ENCODE measurements at regions of chr7 and their contacts with region 1.

Region 1: DNA sequence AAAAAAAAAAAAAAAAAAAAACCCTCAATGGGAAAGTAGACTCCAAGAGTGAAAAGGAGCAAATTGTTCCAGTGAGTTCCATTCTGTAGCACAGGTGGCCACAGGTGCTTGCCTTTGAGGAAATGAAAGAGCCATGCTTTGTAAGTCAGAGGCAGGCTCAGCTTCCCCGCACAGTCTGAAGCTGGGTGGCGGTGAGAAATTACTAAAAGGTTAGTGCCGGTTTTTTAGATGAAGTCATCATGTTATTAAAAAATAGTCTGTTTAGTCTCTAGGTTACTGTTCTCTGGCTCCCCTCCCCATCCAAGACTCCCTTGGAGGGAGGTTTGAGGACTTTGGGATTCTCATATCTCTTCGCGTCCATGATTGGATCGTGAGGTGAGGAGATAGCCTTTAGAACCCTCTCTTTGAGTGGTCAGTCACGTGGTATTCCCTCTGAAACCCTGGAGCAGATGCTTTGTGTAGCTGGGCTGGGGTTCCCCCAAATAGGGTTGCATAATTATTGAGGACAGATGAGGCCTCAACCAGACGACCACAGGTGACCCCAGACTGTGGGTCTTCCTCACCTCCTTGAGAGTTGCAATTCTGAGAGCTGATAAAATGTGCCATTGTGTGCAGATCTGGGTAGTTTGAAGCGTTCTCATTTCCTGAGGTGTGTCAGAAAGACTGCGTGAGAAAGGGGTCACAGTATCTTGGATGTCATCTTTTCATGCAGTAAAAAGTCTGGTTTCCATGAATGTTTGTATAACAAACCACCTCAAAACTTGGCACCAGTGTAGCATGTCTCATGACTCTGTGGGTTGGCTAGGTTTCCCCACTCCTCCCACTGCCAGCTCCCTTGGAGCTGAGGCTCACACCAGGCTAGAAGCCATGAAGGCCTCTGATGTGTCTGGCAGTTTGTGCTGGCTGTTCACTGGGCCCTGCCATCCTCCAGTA is 27.1 kb downstream of the OGDH start:
- DNase-seq: peak in 12 of 14 experiments; percentile 29 to 92 (median 59)
- ATAC-seq: peak; percentile 47
- H3K4me3 ChIP-seq: no peak overlapping the region
- H3K4me3 Mint-ChIP-seq: peak overlapping the region; percentile 78
- H3K27ac ChIP-seq: peak overlapping the region; percentile 87 to 91
- H3K27ac Mint-ChIP-seq: peak overlapping the region; percentile 96
- H3K4me1 ChIP-seq: peaks cover 100% of the 10 kb centered on the region
- H3K4me1 Mint-ChIP-seq: peaks cover 81% of the 10 kb centered on the region
- H3K27me3 ChIP-seq: no peaks in the 10 kb centered on the region
- H3K27me3 Mint-ChIP-seq: no peaks in the 10 kb centered on the region
- CTCF ChIP-seq: no peak

Region 2: DNA sequence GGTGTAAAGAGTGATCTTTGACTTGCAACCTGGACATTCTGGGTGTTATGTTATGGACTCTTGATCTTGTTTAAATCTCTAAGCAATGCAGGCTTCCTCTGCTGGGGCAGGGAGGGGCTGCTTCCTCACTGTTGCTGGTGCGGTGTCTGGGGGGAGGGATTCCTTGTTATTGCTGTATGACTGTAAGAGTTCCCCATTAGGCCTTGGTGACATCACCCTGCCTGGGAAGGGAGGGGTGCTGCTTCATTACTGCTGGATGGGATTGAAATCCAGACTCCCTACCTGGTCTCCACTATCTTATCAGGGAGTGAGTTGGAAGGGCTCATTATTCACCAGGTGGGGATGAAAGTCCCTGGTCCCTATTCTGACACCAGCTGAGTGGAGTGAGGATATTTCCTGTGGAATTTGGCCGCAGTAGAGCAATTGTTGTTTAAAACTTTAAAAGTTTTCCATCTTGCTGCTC is 18.3 kb before region 1 on chr7:
- CTCF ChIA-PET with region 1: interaction called, 9 read pairs
- POLR2A ChIA-PET with region 1: interaction called, 11 read pairs
- intact Hi-C with region 1: no loop called
- DNase-seq: peak in 7 of 14 experiments; percentile 32 to 77 (median 56)
- ATAC-seq: peak; percentile 74
- H3K4me3 ChIP-seq: no peak overlapping the region
- H3K4me3 Mint-ChIP-seq: peak overlapping the region; percentile 73
- H3K27ac ChIP-seq: peak overlapping the region in 1 of 2 donors; percentile 56
- H3K27ac Mint-ChIP-seq: peak overlapping the region; percentile 86
- H3K4me1 ChIP-seq: peaks cover 68% of the 10 kb centered on the region
- H3K4me1 Mint-ChIP-seq: peaks cover 69% of the 10 kb centered on the region
- H3K27me3 ChIP-seq: no peaks in the 10 kb centered on the region
- H3K27me3 Mint-ChIP-seq: no peaks in the 10 kb centered on the region
- CTCF ChIP-seq: no peak

Region 3: DNA sequence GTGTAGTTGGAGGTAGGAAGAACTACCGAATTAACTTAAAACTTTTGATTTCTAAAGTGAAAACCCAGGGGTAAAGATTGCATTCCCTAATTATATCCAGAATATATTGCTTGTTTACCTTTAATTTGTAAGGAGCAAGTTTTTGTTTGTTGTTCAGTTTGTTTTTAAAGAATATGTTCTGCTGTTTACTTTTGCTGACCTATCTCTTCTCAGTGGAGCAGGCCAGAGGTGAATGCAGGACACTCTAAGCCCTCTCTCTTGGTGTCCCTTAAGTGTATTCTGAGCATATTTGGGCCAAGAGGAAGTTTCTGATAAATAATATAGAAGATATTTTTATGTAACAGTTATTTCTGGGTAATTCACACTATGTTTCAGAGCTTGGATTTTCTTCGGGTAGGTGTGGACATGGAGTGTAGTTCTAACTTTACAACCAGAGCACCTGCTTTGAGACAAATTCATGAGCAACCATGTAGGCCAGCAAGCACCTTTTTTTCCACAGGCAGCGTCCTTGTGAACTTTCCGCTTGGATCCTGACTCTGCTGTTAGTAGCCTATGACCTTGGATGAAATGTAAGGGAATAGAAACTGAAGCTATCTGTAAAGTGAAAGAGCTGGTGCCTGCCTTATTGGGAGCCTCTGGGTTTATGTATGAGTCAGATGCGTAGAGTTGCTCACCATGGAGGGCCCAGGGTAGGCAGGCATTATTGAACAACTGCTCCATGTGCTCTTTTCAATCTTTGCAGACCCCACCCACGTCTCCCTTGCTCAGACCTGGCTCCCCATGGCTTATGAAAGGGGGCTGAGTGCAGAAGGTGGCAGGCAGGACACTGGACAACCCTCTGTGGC is 11.0 kb before region 1 on chr7:
- CTCF ChIA-PET with region 1: interaction called, 9 read pairs
- POLR2A ChIA-PET with region 1: interaction called, 40 read pairs
- intact Hi-C with region 1: no loop called
- DNase-seq: peak in 6 of 14 experiments; percentile 22 to 66 (median 58)
- ATAC-seq: peak; percentile 67
- H3K4me3 ChIP-seq: peak overlapping the region; percentile 23
- H3K4me3 Mint-ChIP-seq: peak overlapping the region; percentile 13
- H3K27ac ChIP-seq: peak overlapping the region in 1 of 2 donors; percentile 85
- H3K27ac Mint-ChIP-seq: peak overlapping the region; percentile 84
- H3K4me1 ChIP-seq: peaks cover 84% of the 10 kb centered on the region
- H3K4me1 Mint-ChIP-seq: peaks cover 87% of the 10 kb centered on the region
- H3K27me3 ChIP-seq: no peaks in the 10 kb centered on the region
- H3K27me3 Mint-ChIP-seq: no peaks in the 10 kb centered on the region
- CTCF ChIP-seq: no peak

Measured in CD4-positive, alpha-beta T cell (primary cell).